ENCODE measurements at regions of chr20 and their contacts with region 1.

Region 1: GRCh38 chr20:32652739-32653526 is 20.8 kb downstream of the C20orf203 start:
- DNase-seq: peak; percentile 56 to 95
- H3K4me3 ChIP-seq: no peak overlapping the region
- CTCF ChIP-seq: peak in 1 of 3 donors; percentile 79
- POLR2A ChIP-seq: no peak

Region 2: DNA sequence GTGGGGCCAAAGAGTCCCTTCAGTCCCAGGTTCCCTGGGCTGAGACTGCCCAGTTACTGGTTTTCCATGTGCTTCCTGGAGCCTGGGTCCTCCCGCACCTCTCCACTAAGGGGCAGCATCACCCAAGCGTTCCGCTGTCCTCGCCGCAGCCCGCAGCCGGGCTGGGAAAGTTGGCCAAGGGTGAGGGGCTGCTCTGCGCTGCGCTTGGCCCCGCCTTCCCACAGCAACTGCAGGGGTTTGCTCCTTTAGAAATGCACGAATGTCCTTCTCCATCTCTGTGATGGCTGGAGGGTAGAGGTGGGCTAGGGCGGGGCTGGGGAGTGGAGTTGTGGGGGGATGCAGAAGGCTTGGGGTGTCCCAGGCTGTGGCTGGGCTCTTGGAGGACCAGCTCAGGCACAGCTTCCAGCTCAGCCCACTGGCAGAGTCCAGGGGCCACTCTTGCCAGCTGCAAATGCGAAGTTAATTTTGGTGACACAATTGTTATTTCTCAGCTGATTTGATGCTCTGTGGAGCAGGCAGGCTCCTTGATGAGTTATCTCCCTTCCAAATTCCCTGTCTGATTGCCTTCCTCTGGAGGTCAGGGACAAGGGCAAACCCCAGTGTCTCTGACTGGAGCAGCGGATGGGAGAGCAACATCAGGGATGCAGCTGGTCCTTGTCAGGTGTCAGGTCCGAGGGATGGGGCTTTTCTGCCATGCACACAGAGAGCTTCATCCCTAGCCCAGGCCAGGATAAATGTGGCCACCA is 131.0 kb before region 1 on chr20:
- intact Hi-C with region 1: loop called (anchors 2 kb)
- DNase-seq: no peak
- H3K4me3 ChIP-seq: no peak overlapping the region
- CTCF ChIP-seq: no peak
- POLR2A ChIP-seq: no peak

Region 3: DNA sequence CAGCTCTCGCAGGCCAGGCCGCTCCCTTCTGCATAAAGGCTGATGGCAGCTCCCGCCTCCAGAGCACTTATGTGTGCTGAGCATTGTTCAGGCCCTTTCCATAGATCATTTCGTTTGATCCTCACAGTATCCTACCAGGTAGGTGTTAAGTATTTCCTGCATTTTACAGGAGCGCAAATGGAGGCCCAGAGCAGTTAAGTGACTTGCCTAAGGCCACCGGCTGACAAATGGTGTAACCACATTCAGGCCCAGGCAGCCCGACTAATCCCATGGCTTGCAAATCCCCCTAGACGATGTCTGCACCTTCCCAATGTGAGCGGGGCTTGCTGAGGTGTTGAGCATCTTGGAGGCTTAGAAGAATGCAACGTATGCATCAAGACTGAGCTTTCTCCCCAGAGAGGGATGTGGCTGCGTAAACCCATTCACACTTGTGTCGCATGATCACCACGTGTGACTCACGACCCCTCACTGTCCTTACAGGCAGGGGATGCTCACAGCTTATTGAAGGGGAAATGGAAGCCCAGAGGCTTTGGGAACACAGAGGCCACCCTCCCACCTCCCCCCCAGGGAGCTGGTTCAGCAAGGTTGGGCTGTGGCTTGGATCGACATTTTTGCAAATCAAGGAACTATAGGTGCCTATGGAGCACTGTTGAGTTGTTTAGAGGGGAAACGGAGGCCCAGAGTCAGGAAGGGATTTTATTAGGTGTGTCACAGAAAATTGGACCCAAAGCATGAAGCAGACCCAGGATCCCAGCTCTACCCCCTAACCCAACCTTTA is 361.6 kb after region 1 on chr20:
- intact Hi-C with region 1: no loop called
- DNase-seq: no peak
- H3K4me3 ChIP-seq: no peak overlapping the region
- CTCF ChIP-seq: no peak
- POLR2A ChIP-seq: no peak